HEK293 (cell line): ENCODE measurements at regions of chr11 and their contacts with region 1.

Region 1: GRCh38 chr11:75248690-75249268 is 8.2 kb downstream of the TPBGL start:
- H3K4me3 ChIP-seq: no peak overlapping the region
- H3K27ac ChIP-seq: no peak overlapping the region
- H3K4me1 ChIP-seq: no peaks in the 10 kb centered on the region
- CTCF ChIP-seq: peak; percentile 97

Region 2: GRCh38 chr11:74773481-74773880 is 475.3 kb before region 1 on chr11:
- CTCF ChIA-PET with region 1: no interaction called
- POLR2A ChIA-PET with region 1: no interaction called
- H3K4me3 ChIP-seq: no peak overlapping the region
- H3K27ac ChIP-seq: no peak overlapping the region
- H3K4me1 ChIP-seq: no peaks in the 10 kb centered on the region
- CTCF ChIP-seq: no peak

Region 3: DNA sequence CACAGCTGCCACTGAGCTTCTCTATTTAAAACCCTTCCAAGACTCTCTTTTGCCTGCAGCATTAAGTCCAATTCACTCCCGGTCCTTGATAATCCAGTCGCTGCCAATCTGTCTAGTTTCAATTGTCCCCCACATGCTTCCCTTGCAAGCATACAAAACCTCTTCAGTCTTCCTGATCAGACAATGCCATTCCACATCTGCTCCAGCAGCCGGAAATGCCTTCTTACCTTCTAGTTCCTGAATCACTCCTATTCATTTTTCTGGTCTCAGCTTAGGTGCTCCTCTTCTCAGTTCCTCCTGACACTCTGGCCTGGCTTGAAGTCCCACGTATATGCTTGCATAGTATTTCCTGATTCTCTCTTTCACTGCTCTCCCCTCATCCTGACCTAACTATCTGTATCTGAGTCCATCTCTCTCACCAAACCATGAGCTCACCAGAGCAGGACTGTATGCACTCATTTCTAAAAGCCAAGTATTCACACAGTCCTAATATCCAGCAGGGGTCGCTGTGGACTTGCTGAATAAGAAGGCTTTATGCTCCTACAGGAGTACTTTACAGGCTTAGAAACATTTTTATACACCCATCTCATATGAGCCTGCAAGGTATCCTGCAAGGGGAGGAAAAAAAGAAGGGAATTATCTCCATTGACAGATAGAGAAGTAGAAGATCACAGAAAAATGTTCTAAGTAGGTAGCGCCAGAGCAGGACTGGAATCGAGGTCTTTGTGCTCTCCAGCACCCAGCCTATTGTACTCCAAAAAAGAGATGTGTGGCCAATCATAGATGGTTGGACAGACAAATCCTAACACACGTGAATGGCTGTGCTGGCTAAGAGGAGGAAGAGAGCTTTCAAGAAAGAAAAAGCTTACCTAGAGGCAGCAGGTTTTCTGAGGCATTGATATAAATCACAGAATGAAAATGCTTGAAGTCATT is 319.1 kb before region 1 on chr11:
- CTCF ChIA-PET with region 1: interaction called, 40 read pairs
- POLR2A ChIA-PET with region 1: no interaction called
- H3K4me3 ChIP-seq: no peak overlapping the region
- H3K27ac ChIP-seq: no peak overlapping the region
- H3K4me1 ChIP-seq: no peaks in the 10 kb centered on the region
- CTCF ChIP-seq: peak; percentile 42; the same call in 1 of the 2 replicates

Region 4: GRCh38 chr11:75031771-75032549 is 216.8 kb before region 1 on chr11:
- CTCF ChIA-PET with region 1: interaction called, 90 read pairs
- POLR2A ChIA-PET with region 1: no interaction called
- H3K4me3 ChIP-seq: no peak overlapping the region
- H3K27ac ChIP-seq: no peak overlapping the region
- H3K4me1 ChIP-seq: no peaks in the 10 kb centered on the region
- CTCF ChIP-seq: peak; percentile 69

Region 5: DNA sequence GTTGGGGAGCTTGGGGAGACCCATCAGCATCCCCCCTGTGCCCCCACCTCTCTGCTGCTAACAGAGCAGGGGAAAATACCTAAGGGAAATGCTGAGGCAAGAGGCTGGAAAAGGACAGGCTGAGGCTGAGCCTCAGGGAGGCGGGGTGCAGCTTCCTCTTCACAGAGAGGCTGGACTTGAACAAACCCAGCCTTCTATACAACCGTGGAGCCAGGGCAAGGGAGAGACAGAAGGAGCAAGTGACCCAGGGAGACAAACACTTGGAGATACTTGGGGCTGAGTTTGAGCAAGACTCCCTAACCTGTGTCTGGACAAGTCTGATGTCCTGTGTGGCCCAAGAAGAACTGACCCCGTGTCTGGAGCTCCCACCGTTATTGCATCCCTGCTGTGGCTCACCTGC is 97.9 kb before region 1 on chr11 and contains the start of gene SLCO2B1:
- CTCF ChIA-PET with region 1: interaction called, 273 read pairs
- POLR2A ChIA-PET with region 1: no interaction called
- H3K4me3 ChIP-seq: no peak within 1 kb of the TSS
- H3K27ac ChIP-seq: no peak within 1 kb of the TSS
- H3K4me1 ChIP-seq: no peaks in the 10 kb centered on the region
- CTCF ChIP-seq: no peak

Region 6: DNA sequence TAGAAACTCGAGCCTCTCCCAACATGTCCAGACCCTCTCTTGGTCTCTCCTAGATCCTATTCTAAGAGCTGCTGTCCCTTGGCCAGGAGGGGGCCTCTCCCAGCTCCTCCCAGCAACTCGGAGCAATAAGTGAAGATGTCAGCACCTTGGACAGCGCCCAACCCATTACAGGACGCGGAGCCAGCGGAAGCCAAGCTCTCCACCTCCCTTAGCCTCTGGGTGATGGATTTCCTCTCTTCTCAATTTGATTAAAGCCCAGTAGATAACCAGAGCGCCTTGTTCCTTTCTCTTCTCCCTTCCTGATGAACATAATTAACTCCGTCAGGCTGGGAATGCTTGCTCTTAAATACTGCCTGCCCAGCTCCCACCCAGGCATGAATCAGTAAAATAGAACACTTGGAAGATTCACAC is 34.4 kb before region 1 on chr11:
- CTCF ChIA-PET with region 1: interaction called, 15 read pairs
- POLR2A ChIA-PET with region 1: no interaction called
- H3K4me3 ChIP-seq: no peak overlapping the region
- H3K27ac ChIP-seq: no peak overlapping the region
- H3K4me1 ChIP-seq: no peaks in the 10 kb centered on the region
- CTCF ChIP-seq: 0 out of 2 replicates have a peak, but pooled peaks have one; percentile 16

Region 7: GRCh38 chr11:75270896-75271418 is 22.2 kb after region 1 on chr11:
- CTCF ChIA-PET with region 1: interaction called, 11 read pairs
- POLR2A ChIA-PET with region 1: no interaction called
- H3K4me3 ChIP-seq: no peak overlapping the region
- H3K27ac ChIP-seq: no peak overlapping the region
- H3K4me1 ChIP-seq: no peaks in the 10 kb centered on the region
- CTCF ChIP-seq: no peak